Mammary epithelial cell (primary cell): ENCODE measurements at regions of chr20 and their contacts with region 1.

Region 1: GRCh38 chr20:3420211-3420707 is 12.8 kb upstream of the DNAAF9 start:
- DNase-seq: peak; percentile 93
- H3K4me3 ChIP-seq: no peak overlapping the region
- H3K27ac ChIP-seq: peak overlapping the region; percentile 63
- H3K4me1 ChIP-seq: peaks cover 11% of the 10 kb centered on the region
- H3K27me3 ChIP-seq: no peaks in the 10 kb centered on the region
- CTCF ChIP-seq: no peak

Region 2: DNA sequence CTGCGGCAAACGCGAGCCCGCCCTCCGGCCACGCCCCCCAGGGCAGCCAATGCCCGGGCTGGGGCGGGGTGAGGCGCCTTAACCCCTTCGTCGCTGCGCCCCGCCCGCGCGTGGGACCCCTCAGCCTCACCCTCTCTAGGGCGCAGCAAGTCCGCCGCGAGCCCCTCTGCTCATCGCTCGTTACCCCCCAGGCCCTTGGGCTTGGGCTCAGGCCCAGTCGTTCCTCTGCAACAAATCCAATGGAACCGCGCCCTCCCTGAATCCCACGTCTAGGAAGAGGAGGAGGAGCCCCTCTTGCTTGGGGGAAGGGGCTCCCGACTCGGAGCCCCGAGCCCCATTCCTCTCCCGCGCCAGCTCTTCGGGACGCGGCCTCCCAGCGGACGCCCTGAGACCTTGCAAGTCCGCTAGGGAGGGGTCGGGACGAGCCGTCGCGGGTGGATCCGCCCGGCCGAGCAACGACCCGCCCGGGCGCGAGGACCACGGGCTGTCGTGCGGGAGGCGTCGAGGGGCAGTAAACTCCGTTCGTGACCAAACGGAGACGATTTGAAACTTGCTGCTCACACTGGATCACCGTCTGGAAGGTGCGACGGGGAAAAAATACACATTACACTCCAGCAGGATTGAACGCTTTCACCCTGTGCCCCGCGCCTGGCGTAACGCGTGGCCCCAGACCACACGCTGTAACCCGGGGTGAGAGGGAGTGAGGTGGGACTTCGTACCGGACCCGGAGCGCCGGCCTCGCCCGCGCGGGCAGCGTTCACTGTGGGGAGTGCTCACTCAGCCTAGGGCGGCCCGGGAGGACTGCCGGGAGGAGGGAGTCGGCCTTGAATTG is 246.4 kb before region 1 on chr20:
- CTCF ChIA-PET with region 1: no interaction called
- dilution Hi-C with region 1: loop called (anchors 10 kb)
- in situ Hi-C with region 1: no loop called
- intact Hi-C with region 1: no loop called
- DNase-seq: peak; percentile 69
- H3K4me3 ChIP-seq: peak overlapping the region; percentile 66 to 96 (median 94)
- H3K27ac ChIP-seq: peak overlapping the region; percentile 31
- H3K4me1 ChIP-seq: peaks cover 18% of the 10 kb centered on the region
- H3K27me3 ChIP-seq: no peaks in the 10 kb centered on the region
- CTCF ChIP-seq: peak in 1 of 2 donors; percentile 36

Region 3: DNA sequence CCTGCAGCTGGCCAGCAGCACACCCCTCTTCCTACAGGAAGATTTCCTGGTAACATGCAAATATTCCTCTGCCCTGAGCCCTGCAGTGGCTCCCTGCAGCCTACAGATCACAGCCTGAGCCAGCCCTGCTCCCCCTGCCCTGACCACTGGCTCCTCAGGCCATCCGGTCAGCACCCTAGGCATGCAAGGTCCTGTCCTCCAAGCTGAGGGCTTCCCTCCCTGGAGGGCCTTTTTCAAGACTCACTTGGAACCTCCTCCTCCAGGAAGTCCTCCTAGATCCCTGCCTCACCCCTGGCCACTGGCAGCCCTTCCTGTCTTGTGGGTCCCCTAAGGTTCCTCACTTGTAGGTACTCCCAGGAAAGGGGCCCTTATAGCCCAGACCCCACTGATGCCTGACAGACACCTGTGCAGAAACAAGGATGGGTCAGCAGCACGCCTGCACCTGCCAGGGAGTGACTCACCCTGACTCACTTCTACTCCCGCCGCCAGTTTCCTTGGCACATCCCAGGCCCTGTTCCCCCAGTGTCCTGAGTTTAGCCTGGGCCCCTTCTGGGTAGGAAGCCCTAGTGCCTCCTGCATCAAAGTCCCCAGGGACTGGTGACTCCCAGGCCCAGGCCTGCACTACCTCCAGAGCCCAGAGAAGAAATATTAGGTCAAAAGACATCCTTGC is 184.5 kb before region 1 on chr20:
- CTCF ChIA-PET with region 1: no interaction called
- dilution Hi-C with region 1: no loop called
- in situ Hi-C with region 1: no loop called
- intact Hi-C with region 1: no loop called
- DNase-seq: peak; percentile 73
- H3K4me3 ChIP-seq: no peak overlapping the region
- H3K27ac ChIP-seq: no peak overlapping the region
- H3K4me1 ChIP-seq: peaks cover 28% of the 10 kb centered on the region
- H3K27me3 ChIP-seq: no peaks in the 10 kb centered on the region
- CTCF ChIP-seq: no peak

Region 4: GRCh38 chr20:3407771-3408637 is 12.3 kb before region 1 on chr20:
- CTCF ChIA-PET with region 1: no interaction called
- dilution Hi-C with region 1: no loop called
- in situ Hi-C with region 1: no loop called
- intact Hi-C with region 1: loop called (anchors 1 kb)
- DNase-seq: peak; percentile 90
- H3K4me3 ChIP-seq: peak overlapping the region; percentile 70 to 87 (median 72)
- H3K27ac ChIP-seq: peak overlapping the region; percentile 52
- H3K4me1 ChIP-seq: peaks cover 18% of the 10 kb centered on the region
- H3K27me3 ChIP-seq: no peaks in the 10 kb centered on the region
- CTCF ChIP-seq: no peak

Region 5: DNA sequence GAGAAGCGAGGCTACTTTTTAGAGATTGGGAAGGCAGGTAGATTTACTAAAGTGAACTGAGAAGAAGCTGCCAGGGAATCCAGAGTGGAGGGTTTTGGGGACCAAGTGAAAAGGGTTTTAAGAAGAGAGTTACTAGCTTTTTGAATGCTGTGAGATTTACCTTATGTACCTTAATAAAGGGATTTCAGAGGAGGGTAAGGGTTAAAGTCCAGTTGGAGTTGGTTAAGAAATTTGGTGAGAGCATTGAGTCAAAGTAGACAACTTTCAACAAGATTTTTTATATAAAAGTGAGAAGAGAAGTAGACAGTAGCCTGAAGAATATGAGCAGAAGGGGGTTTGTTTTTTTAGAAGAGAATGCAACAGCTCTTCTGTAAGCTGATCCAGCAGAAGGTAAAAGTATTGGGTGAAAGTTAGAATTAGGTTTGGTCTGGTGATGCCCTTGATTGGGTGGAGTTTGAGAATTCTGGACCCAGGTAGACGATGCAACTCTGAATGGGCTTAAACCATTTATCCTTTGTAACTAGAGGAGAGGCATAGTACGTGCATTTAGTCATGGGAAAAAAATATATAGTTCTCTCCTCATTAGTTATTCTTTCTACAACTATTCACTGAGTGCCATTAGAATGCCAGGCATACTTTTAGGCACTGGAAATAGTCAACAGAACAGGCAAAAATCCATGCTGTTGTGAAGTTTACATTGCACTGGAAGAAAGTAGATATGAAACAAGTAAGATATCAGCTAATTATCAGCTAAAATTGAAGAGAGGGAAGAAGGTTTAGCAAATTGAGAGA is 95.3 kb after region 1 on chr20:
- CTCF ChIA-PET with region 1: no interaction called
- dilution Hi-C with region 1: no loop called
- in situ Hi-C with region 1: no loop called
- intact Hi-C with region 1: no loop called
- DNase-seq: no peak
- H3K4me3 ChIP-seq: no peak overlapping the region
- H3K27ac ChIP-seq: no peak overlapping the region
- H3K4me1 ChIP-seq: no peaks in the 10 kb centered on the region
- H3K27me3 ChIP-seq: no peaks in the 10 kb centered on the region
- CTCF ChIP-seq: no peak

Region 6: DNA sequence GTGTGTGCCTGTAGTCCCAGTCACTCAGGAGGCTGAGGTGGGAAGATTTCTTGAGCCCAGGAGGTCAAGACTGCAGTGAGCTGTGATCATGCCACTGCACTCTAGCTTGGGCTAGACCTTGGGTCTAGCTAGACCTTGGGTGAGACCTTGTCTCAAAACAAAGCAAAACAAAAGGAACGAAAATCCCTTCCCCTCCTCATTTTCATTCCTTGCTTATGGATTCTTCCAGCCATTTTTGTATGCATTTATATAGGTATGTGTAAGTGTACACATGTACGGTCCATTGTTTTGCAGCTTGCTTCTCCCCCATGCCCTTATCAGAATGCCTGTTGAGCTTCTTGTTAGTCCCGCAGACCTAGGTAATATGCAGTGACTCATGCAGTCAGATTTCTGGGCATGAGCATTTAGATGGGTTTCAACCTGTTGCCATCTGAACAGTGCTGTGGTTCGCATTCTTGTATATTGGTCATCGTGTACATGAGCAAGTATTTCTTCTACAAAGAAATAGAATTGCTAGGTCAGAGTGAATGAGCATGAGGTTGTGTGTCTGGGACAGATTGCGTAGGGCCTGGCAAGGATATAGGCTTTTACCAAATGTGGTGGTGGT is 123.7 kb after region 1 on chr20:
- CTCF ChIA-PET with region 1: no interaction called
- dilution Hi-C with region 1: no loop called
- in situ Hi-C with region 1: no loop called
- intact Hi-C with region 1: loop called (anchors 1 kb)
- DNase-seq: peak; percentile 99
- H3K4me3 ChIP-seq: no peak overlapping the region
- H3K27ac ChIP-seq: peak overlapping the region; percentile 94
- H3K4me1 ChIP-seq: peaks cover 49% of the 10 kb centered on the region
- H3K27me3 ChIP-seq: no peaks in the 10 kb centered on the region
- CTCF ChIP-seq: no peak